ENCODE measurements at regions of chr2 and their contacts with region 1.

Region 1: GRCh38 chr2:206296128-206296527 is 21.7 kb downstream of the ZDBF2 start:
- DNase-seq: no peak
- H3K4me3 Mint-ChIP-seq: no peak overlapping the region
- H3K27ac Mint-ChIP-seq: no peak overlapping the region
- H3K4me1 Mint-ChIP-seq: no peaks in the 10 kb centered on the region
- H3K27me3 Mint-ChIP-seq: no peaks in the 10 kb centered on the region

Region 2: DNA sequence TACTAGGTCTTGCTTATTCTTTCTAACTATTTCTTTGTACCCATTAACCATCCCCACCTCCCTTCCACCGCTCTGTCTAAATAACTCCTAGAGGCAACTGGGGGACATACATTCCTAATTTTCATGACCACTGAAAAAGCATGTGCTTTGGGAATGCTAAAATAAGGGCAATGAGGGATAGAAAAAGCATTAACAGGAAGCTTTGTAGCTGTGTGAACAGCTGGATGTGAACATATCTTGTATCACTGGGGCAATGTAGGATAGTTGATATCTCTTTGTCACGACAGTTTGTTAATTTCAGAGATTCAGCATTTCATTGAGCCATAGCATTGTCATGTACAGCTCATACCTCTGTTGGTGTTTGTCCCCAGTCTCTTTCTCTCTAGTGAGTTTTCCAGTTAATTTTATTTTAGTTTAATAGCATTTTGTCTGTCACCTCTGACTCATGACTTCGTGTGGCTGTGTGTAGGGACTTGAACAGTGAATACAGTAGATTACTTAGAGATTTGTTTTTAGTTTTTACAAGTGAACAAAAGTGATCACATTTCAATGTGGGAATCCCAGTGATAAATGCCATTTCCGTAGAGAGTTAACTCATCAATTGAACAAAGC is 844.1 kb before region 1 on chr2:
- CTCF ChIA-PET with region 1: no interaction called
- intact Hi-C with region 1: loop called (anchors 10 kb)
- DNase-seq: no peak
- H3K4me3 Mint-ChIP-seq: no peak overlapping the region
- H3K27ac Mint-ChIP-seq: no peak overlapping the region
- H3K4me1 Mint-ChIP-seq: no peaks in the 10 kb centered on the region
- H3K27me3 Mint-ChIP-seq: no peaks in the 10 kb centered on the region

Region 3: DNA sequence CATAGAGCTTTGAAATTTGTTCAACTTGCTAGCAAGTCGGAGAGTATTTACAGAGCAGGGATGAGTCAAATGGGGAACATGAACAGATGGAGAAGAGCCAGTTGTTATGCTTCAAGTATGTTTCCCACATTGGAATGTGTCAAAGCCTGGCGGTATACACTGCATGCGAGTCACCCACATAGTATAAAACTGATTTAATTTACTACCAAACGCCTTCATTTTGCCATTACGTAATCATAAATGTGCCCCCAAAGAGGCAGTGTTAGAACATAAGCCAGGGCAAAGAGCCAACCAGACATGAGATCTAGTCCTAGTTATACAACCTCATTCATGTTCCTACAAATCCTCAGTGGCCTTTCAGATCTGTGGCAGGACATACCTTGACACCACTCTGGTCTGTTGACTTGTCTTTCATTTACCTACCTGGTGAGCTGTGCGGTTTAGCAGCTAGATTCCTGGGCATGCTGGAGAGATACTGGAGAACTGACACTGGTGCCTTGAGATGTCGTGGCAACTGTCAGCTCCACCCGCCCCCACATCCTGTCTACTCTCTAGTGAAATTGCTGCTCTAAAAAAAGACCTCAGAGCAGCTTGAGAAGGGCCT is 635.5 kb before region 1 on chr2:
- CTCF ChIA-PET with region 1: no interaction called
- intact Hi-C with region 1: no loop called
- DNase-seq: peak; percentile 75
- H3K4me3 Mint-ChIP-seq: peak overlapping the region; percentile 5
- H3K27ac Mint-ChIP-seq: no peak overlapping the region
- H3K4me1 Mint-ChIP-seq: peaks cover 18% of the 10 kb centered on the region
- H3K27me3 Mint-ChIP-seq: no peaks in the 10 kb centered on the region

Region 4: DNA sequence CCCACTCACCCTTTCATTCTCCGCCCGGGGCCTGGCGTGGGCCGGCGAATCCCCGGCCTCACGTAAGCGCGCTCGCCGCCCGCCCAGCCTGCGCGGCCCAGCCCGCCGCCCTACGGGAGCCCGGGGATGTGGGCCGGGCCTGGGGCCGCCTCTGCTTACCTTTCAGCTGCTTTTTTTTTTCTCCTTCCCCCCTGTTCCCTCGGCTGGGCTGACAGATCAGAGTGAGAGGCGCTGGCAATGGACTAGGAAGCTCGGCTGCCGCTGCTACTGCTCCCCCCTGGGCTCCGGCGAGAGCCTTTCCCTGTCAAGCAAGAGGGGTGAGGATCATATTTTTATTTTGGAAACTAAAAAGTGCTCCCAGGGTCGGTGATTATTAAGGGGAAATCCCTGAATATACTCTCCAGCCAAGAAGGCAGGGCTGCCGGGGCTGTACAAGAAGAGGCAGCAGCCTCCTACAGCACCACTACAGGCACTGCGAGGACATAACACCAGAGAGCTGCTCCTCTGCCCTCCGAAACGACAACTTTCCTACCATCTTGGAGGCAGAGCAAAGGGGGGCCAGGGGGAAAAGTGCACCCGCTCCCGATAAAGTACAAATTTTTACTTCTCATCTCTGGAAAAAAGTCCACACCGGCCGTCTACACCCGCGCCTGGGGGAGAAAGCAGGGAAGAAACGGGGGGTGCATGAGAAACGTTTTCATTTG is 210.2 kb before region 1 on chr2 and contains the start of gene INO80D:
- CTCF ChIA-PET with region 1: no interaction called
- intact Hi-C with region 1: no loop called
- DNase-seq: peak; percentile 86
- H3K4me3 Mint-ChIP-seq: peak within 1 kb of the TSS; percentile 97
- H3K27ac Mint-ChIP-seq: peak within 1 kb of the TSS; percentile 100
- H3K4me1 Mint-ChIP-seq: peaks cover 35% of the 10 kb centered on the region
- H3K27me3 Mint-ChIP-seq: no peaks in the 10 kb centered on the region
- total RNA-seq, gene INO80D: 14.8 to 15.0 TPM

Region 5: DNA sequence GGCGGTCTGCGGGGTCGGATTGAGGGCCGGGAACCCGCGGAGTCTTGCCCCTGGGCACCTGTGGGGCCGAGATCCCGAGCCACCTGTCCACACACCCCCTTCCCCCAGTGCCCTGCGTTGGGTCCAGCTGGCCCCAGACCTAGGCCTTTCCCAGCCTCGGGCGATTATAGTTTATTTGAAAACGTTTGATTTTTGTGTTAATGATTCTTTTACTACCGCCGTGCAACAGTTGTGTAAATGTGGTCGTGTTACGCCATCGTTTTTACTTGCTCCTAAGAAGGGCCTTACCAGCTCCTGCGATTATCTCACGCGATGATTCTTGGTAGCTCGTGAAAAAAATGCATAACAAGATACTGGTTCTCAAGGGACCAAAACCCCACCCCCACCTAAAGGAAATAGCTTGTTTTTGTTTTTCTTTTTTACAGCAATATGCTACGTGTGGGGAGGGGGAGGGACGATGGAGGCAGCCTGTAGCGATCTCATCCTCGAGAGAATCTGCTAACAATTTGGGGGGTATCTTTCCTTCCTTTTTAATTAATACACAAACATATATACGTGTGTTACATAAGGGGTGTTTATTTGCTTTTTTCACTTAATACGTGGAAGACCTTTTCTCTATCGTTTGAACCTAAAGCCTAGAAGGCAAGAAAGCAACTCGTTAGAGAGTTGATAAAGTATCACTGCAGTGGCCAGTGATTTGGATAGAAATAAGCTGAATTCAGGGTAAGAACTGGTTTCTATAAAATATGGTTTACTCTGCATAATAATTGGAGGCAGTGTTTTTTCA is 20.7 kb before region 1 on chr2:
- CTCF ChIA-PET with region 1: no interaction called
- intact Hi-C with region 1: no loop called
- DNase-seq: peak; percentile 21
- H3K4me3 Mint-ChIP-seq: peak overlapping the region; percentile 82
- H3K27ac Mint-ChIP-seq: peak overlapping the region; percentile 63
- H3K4me1 Mint-ChIP-seq: peaks cover 11% of the 10 kb centered on the region
- H3K27me3 Mint-ChIP-seq: peaks cover 36% of the 10 kb centered on the region

Measured in activated naive CD4-positive, alpha-beta T cell treated with anti-CD3 and anti-CD28 coated beads for 36 hours (primary cell).